Dorsolateral prefrontal cortex (tissue), 120 donors: ENCODE measurements at regions of chr1 and their contacts with region 1.

Region 1: DNA sequence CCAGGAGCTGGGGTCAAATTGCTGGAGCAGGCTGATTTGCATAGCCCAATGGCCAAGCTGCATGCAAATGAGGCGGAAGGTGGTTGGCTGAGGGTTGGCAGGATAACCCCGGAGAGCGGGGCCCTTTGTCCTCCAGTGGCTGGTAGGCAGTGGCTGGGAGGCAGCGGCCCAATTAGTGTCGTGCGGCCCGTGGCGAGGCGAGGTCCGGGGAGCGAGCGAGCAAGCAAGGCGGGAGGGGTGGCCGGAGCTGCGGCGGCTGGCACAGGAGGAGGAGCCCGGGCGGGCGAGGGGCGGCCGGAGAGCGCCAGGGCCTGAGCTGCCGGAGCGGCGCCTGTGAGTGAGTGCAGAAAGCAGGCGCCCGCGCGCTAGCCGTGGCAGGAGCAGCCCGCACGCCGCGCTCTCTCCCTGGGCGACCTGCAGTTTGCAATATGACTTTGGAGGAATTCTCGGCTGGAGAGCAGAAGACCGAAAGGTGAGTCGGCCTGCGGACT is at the start of gene GADD45A:
- DNase-seq: peak; percentile 88 to 98 (median 97)
- H3K4me3 ChIP-seq: peak within 1 kb of the TSS; percentile 50 to 99 (median 83)
- H3K27ac ChIP-seq: peak within 1 kb of the TSS; percentile 9 to 96 (median 85)
- H3K27me3 ChIP-seq: no peaks in the 10 kb centered on the region
- CTCF ChIP-seq: peak in 19 of 56 donors; percentile 7 to 48 (median 34)
- total RNA-seq, gene GADD45A: 14.8 to 161 (median 25.8) TPM

Region 2: GRCh38 chr1:67314696-67315095 is 370.4 kb before region 1 on chr1:
- intact Hi-C with region 1: no loop called
- DNase-seq: no peak
- H3K4me3 ChIP-seq: no peak overlapping the region
- H3K27ac ChIP-seq: no peak overlapping the region
- H3K27me3 ChIP-seq: peaks cover 0 to 4% (median 0%) of the 10 kb centered on the region in 45 donors
- CTCF ChIP-seq: no peak

Region 3: GRCh38 chr1:67430352-67431155 is 254.6 kb before region 1 on chr1 and contains the start of gene SERBP1:
- intact Hi-C with region 1: loop called (anchors 5 to 10 kb)
- DNase-seq: peak; percentile 94 to 97 (median 96)
- H3K4me3 ChIP-seq: peak within 1 kb of the TSS; percentile 62 to 96 (median 86)
- H3K27ac ChIP-seq: peak within 1 kb of the TSS; percentile 36 to 95 (median 85)
- H3K27me3 ChIP-seq: no peaks in the 10 kb centered on the region
- CTCF ChIP-seq: peak in 15 of 56 donors; percentile 1 to 42 (median 16)
- total RNA-seq, gene SERBP1: 69.2 to 109 (median 88.4) TPM

Region 4: GRCh38 chr1:67469431-67469830 is 215.7 kb before region 1 on chr1:
- intact Hi-C with region 1: no loop called
- DNase-seq: no peak
- H3K4me3 ChIP-seq: no peak overlapping the region
- H3K27ac ChIP-seq: peak overlapping the region in 7 of 59 donors; percentile 4 to 43 (median 19)
- H3K27me3 ChIP-seq: no peaks in the 10 kb centered on the region
- CTCF ChIP-seq: no peak

Region 5: GRCh38 chr1:67535474-67535873 is 149.6 kb before region 1 on chr1:
- intact Hi-C with region 1: loop called in 1 of 2 experiments (anchors 5 kb)
- DNase-seq: peak; percentile 13 to 75 (median 60)
- H3K4me3 ChIP-seq: no peak overlapping the region
- H3K27ac ChIP-seq: no peak overlapping the region
- H3K27me3 ChIP-seq: no peaks in the 10 kb centered on the region
- CTCF ChIP-seq: peak; percentile 60 to 90 (median 76)

Region 6: DNA sequence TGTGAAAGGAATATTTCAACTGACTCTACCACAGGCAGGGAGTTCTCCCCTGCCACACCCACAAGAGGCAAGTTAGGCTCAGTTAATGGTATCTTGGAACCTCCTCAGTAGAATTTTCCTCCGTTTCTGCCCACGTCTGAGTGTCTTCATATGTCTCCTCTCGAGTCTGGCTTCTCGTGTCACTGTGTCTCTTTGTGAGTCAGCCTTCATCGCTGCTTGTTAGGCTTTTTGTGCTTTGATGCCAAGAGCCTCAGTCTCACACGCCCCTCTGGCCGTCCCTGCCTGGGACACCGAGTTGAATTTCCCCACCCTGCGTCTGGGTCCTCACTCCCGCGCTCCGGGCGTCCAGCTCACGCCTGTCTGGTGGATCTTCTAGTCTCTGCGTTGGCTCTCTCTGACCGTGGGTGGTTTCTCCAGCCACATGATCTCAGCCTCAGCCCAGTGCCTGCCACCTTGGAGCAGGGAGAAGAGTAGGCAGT is 125.9 kb before region 1 on chr1:
- intact Hi-C with region 1: loop called in 1 of 2 experiments (anchors 10 kb)
- DNase-seq: peak; percentile 3 to 78 (median 55)
- H3K4me3 ChIP-seq: peak overlapping the region in 33 of 59 donors; percentile 7 to 48 (median 22)
- H3K27ac ChIP-seq: peak overlapping the region in 4 of 59 donors; percentile 5 to 10 (median 7)
- H3K27me3 ChIP-seq: peaks cover 0 to 4% (median 0%) of the 10 kb centered on the region in 45 donors
- CTCF ChIP-seq: no peak

Region 7: GRCh38 chr1:67760030-67760821 is 75.1 kb after region 1 on chr1:
- intact Hi-C with region 1: loop called (anchors 2 to 5 kb)
- DNase-seq: peak in 7 of 10 donors; percentile 37 to 60 (median 53)
- H3K4me3 ChIP-seq: peak overlapping the region in 1 of 59 donors; percentile 9
- H3K27ac ChIP-seq: peak overlapping the region in 3 of 59 donors; percentile 16 to 43 (median 37)
- H3K27me3 ChIP-seq: peaks cover 0 to 11% (median 0%) of the 10 kb centered on the region in 45 donors
- CTCF ChIP-seq: peak; percentile 79 to 99 (median 94)

Region 8: DNA sequence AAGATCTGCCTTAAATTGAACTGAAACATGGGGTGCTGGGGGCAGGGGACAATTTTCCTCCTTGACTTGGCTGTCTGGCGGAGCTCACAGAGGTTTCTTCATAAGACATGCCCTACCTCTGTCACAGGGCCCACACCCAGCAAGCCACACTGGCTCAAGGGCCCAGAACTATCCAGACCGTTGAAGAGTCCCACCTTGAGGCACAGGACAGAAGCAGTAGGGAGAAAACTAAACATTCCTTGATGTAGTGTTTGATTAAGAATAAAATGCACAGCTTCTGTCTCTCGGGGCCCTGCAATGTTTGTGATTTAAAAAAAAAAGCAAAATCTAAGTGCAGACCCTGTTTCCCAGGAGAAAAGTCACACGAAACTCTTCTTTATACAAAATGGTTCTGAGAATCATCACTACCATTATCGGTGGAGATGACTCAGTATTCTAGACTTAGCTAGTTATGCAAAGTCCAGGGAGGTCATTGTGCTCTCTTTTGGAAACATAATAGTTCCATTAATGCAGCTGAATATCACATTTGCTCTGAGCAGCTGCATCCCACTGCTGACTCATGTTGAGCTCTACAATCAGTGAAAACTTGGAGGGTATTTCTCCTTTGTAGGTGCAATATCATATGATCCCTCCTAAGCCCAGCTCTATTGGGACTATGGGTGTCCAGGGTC is 418.9 kb after region 1 on chr1:
- intact Hi-C with region 1: loop called in 1 of 2 experiments (anchors 5 kb)
- DNase-seq: no peak
- H3K4me3 ChIP-seq: peak overlapping the region in 4 of 59 donors; percentile 3 to 10 (median 6)
- H3K27ac ChIP-seq: peak overlapping the region in 19 of 59 donors; percentile 8 to 79 (median 46)
- H3K27me3 ChIP-seq: no peaks in the 10 kb centered on the region
- CTCF ChIP-seq: no peak